GM12878 (cell line): ENCODE measurements at regions of chr15 and their contacts with region 1.

Region 1: DNA sequence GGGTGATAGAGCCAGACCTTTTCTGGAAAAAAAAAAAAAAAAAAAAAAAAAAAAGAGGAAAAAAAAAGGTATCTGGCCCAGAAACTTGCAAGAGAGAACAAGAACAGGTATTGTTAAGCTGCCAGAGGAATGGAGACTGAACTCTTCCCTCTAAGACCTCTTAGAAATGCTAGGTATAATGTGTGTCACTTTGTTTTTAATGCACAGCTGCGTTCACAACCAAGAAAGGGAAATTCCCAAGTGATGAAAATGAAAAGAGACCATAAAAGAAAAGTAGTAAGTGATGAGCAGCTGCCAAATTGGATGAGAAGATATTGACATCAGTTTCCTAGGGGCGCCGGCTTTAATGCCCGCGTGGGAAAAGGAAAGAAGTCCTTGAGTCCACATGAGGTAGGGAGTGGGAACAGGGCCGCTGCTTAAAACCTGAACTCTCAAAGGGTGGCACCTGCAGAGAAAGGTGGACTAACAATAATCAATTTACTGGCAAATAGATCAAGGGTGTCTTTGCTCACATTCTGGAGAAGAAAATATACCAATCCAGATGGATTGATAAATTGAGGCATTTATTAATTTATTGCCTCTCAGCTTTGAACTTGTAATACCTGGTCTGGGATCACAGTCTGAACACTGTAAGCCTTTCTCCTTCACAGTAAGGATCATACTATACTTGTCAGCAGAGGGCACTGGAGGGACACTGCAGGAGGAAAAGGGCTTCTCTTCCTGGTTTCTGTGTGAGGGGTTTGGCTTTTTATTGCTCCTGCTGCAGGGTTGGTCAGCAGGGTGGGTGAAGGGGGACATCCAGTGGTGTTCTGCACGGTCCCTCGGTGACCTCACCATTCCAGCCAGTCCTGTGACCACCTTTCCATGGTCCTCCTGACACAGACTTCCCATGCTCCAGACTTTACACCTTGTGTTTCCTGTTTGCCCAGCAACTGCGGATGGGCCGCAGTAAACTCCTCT is 131.6 kb downstream of the AQP9 start:
- DNase-seq: peak; percentile 17
- ATAC-seq: peak; percentile 81
- H3K4me3 ChIP-seq: no peak overlapping the region
- H3K27ac ChIP-seq: no peak overlapping the region
- H3K4me1 ChIP-seq: no peaks in the 10 kb centered on the region
- H3K27me3 ChIP-seq: no peaks in the 10 kb centered on the region
- CTCF ChIP-seq: peak; percentile 59 to 69 (median 65)
- EP300 ChIP-seq: no peak
- POLR2A ChIP-seq: no peak
- RAD21 ChIP-seq: peak; percentile 90

Region 2: GRCh38 chr15:58165661-58166060 is 104.1 kb before region 1 on chr15:
- CTCF ChIA-PET with region 1: no interaction called
- POLR2A ChIA-PET with region 1: no interaction called
- RAD21 ChIA-PET with region 1: no interaction called
- SMC1A ChIA-PET with region 1: no interaction called
- in situ Hi-C with region 1: no loop called
- intact Hi-C with region 1: no loop called
- DNase-seq: no peak
- ATAC-seq: no peak
- H3K4me3 ChIP-seq: no peak overlapping the region
- H3K27ac ChIP-seq: no peak overlapping the region
- H3K4me1 ChIP-seq: no peaks in the 10 kb centered on the region
- H3K27me3 ChIP-seq: peaks cover 0 to 4% of the 10 kb centered on the region in 2 experiments; a peak in 2 of 4 replicates
- CTCF ChIP-seq: no peak
- EP300 ChIP-seq: no peak
- POLR2A ChIP-seq: no peak
- RAD21 ChIP-seq: no peak

Region 3: GRCh38 chr15:58331903-58332675 is 62.4 kb after region 1 on chr15:
- CTCF ChIA-PET with region 1: interaction called, 4 read pairs
- POLR2A ChIA-PET with region 1: no interaction called
- RAD21 ChIA-PET with region 1: interaction called, 11 read pairs
- SMC1A ChIA-PET with region 1: interaction called, 11 read pairs
- in situ Hi-C with region 1: no loop called
- intact Hi-C with region 1: no loop called
- DNase-seq: peak; percentile 82
- ATAC-seq: peak; percentile 97
- H3K4me3 ChIP-seq: 0 out of 2 replicates have a peak overlapping the region, but pooled peaks have one; percentile 31
- H3K27ac ChIP-seq: peak overlapping the region; percentile 81
- H3K4me1 ChIP-seq: peaks cover 31% of the 10 kb centered on the region
- H3K27me3 ChIP-seq: no peaks in the 10 kb centered on the region
- CTCF ChIP-seq: no peak
- EP300 ChIP-seq: peak; percentile 71 to 94
- POLR2A ChIP-seq: peak; percentile 76
- RAD21 ChIP-seq: 0 out of 2 replicates have a peak, but pooled peaks have one; percentile 2

Region 4: GRCh38 chr15:58749532-58750337 is 480.0 kb after region 1 on chr15 and contains the start of gene ADAM10:
- CTCF ChIA-PET with region 1: interaction called, 4 read pairs
- POLR2A ChIA-PET with region 1: no interaction called
- RAD21 ChIA-PET with region 1: interaction called, 9 read pairs
- SMC1A ChIA-PET with region 1: interaction called, 4 read pairs
- in situ Hi-C with region 1: no loop called
- intact Hi-C with region 1: loop called (anchors 10 kb)
- DNase-seq: peak; percentile 90
- ATAC-seq: peak; percentile 91
- H3K4me3 ChIP-seq: peak within 1 kb of the TSS; percentile 94
- H3K27ac ChIP-seq: peak within 1 kb of the TSS; percentile 91
- H3K4me1 ChIP-seq: no peaks in the 10 kb centered on the region
- H3K27me3 ChIP-seq: no peaks in the 10 kb centered on the region
- CTCF ChIP-seq: no peak
- EP300 ChIP-seq: no peak
- POLR2A ChIP-seq: peak; percentile 80
- RAD21 ChIP-seq: no peak; the same call in 1 of the 2 replicates
- polyA plus RNA-seq, gene ADAM10: 10.0 to 11.1 TPM

Region 5: DNA sequence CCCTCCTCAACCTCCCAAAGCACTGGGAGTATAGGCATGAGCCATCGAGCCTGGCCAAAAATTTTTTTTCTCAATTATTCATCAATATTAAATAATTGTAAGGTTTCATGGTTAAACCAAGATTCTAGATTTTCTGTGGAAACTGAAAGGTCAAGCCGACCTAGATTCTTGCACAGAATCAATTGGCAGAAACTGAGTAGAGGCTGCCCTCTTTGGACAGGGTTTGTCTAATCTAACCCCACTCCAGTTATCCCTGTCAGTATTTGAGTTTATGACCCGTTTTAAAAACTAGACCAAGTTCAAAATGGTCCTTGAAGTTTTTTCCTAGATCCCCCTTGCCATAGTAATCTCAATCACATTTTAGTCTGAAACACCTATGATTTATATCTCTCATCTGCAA is 488.4 kb after region 1 on chr15:
- CTCF ChIA-PET with region 1: interaction called, 17 read pairs
- POLR2A ChIA-PET with region 1: no interaction called
- RAD21 ChIA-PET with region 1: interaction called, 4 read pairs
- SMC1A ChIA-PET with region 1: interaction called, 5 read pairs
- in situ Hi-C with region 1: loop called (anchors 5 kb)
- intact Hi-C with region 1: loop called (anchors 10 kb)
- DNase-seq: no peak
- ATAC-seq: peak; percentile 72
- H3K4me3 ChIP-seq: no peak overlapping the region
- H3K27ac ChIP-seq: no peak overlapping the region
- H3K4me1 ChIP-seq: no peaks in the 10 kb centered on the region
- H3K27me3 ChIP-seq: no peaks in the 10 kb centered on the region
- CTCF ChIP-seq: peak; percentile 36 to 65 (median 44); a peak in 5 of 6 replicates
- EP300 ChIP-seq: no peak
- POLR2A ChIP-seq: no peak
- RAD21 ChIP-seq: peak; percentile 72